ENCODE measurements at regions of chr4 and their contacts with region 1.

Region 1: DNA sequence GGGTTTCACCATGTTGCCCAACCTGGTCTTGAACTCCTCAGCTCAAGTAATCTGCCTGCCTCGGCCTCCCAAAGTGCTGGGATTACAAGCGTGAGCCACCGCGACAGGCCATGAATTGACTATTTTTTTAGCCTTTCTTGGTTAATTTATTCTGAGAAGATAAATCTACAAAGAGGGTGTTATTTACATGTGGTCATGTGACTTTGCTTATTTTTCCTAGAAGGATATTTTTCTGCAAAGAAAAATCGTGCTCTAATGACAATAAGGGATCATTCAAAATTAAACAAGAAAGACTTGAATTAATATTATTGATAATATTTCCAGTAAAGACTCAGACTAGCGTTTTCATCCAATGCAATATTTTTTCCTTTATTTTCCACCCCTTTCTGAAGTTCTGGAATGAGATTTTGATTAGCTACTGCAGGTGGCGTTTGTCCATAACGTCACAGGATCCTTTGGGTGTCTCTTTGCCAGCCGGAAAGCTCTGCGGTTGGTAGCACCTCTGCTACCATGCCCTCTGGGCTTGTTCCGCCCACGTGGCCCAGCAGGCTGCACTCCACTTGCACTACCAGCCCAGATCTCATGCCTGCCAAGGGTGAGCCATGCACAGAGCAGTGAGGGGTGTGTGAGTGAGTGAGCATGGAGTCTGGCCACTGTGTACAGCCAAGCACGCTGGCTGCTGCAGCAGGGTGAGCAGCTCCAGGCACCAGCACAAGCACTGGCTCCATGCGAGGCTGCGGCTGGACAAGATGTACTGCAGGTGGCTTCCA is 6.4 kb upstream of the HNRNPD start:
- DNase-seq: no peak
- ATAC-seq: no peak
- H3K4me3 ChIP-seq: no peak overlapping the region
- H3K27ac ChIP-seq: no peak overlapping the region
- H3K4me1 ChIP-seq: peaks cover 12% of the 10 kb centered on the region
- H3K27me3 ChIP-seq: no peaks in the 10 kb centered on the region
- CTCF ChIP-seq: no peak
- POLR2A ChIP-seq: no peak

Region 2: DNA sequence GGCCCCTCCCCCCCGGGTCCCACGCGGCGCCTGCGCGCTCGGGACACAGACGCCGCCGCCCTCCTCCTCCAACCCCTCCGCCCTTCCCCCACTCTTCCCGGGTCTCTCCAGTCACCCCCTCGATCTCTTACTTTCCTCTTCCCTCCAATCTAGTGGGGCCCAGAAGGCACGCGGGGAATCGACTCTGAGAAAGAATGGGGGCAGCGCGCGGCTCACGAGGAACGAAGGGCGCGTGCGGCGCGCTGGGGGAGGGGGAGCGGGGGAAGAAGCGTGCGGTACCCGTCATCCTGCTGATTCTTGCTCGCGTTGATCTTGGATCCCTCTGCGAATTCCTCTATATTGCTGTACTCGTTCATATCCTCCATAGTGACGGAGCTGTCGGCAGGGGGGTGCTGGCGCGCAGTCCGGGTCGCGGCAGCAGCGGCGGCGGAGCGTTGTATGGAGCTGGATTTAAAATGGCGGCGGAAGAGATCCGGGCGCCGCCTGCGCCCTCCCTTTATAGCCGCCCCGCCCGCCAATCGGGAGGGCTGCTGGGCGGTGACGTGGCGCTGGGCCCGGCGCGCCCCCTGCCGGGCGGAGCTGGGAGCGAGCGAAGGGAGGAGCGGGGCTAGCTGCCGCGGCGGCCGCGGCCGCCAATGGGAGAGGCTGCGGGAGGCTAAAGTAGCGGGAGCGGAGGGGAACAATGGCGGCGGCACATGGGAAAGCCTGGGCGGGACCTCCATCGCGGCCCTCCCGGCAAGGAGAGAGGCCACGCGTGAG is 49.0 kb after region 1 on chr4:
- intact Hi-C with region 1: loop called (anchors 5 kb)
- DNase-seq: peak; percentile 92 to 95 (median 92)
- ATAC-seq: peak; percentile 81
- H3K4me3 ChIP-seq: peak overlapping the region; percentile 52 to 87
- H3K27ac ChIP-seq: peak overlapping the region; percentile 88 to 99 (median 97)
- H3K4me1 ChIP-seq: peaks cover 45% of the 10 kb centered on the region
- H3K27me3 ChIP-seq: no peaks in the 10 kb centered on the region
- CTCF ChIP-seq: peak; percentile 73 to 100 (median 96)
- POLR2A ChIP-seq: peak; percentile 72 to 89 (median 88)

Region 3: DNA sequence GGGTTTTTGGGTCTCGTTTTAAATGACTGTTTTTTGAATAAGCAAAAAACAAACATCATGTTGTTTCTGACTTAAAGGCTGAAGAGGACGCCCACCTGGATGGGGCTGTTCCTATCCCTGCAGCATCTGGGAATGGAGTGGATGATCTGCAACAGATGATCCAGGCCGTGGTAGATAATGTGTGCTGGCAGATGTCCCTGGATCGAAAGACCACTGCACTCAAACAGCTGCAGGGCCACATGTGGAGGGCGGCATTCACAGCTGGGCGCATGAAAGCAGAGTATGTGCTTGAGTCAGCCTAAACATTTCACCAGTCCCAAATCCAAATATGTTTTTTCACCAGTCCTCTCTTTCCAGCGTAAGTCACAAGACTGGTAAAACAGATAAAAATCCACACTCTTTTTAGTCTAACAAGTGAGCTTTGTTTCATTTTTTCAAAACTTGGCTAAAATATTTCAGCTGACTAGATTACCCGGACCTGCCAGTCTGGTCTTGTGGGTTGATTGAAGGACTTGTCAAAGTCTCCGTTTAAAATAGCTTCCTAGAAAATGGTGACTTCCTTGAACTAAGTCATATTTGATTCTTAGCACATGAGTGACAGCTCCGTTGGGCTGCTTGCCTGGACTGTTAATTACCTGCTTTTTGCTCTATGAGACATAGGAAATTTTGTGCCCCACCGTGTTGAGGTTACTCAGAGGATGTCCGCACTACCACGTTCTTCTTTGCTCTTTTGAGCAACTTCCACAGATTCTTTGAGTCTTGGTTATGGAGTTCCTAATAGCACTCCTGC is 71.0 kb after region 1 on chr4:
- intact Hi-C with region 1: no loop called
- DNase-seq: no peak
- ATAC-seq: no peak
- H3K4me3 ChIP-seq: no peak overlapping the region
- H3K27ac ChIP-seq: no peak overlapping the region
- H3K4me1 ChIP-seq: no peaks in the 10 kb centered on the region
- H3K27me3 ChIP-seq: no peaks in the 10 kb centered on the region
- CTCF ChIP-seq: no peak
- POLR2A ChIP-seq: no peak